ENCODE measurements at regions of chr3 and their contacts with region 1.

Region 1: GRCh38 chr3:47164007-47164881 is at the start of gene SETD2:
- DNase-seq: peak; percentile 71 to 92 (median 83)
- ATAC-seq: peak; percentile 82
- H3K4me3 ChIP-seq: peak within 1 kb of the TSS; percentile 93
- H3K4me3 Mint-ChIP-seq: peak within 1 kb of the TSS; percentile 99
- H3K27ac ChIP-seq: peak within 1 kb of the TSS; percentile 84 to 89
- H3K27ac Mint-ChIP-seq: peak within 1 kb of the TSS; percentile 96
- H3K4me1 ChIP-seq: peaks cover 44% of the 10 kb centered on the region
- H3K4me1 Mint-ChIP-seq: peaks cover 54% of the 10 kb centered on the region
- H3K27me3 ChIP-seq: no peaks in the 10 kb centered on the region
- H3K27me3 Mint-ChIP-seq: no peaks in the 10 kb centered on the region
- CTCF ChIP-seq: peak; percentile 37
- total RNA-seq, gene SETD2: 87.3 to 87.4 TPM

Region 2: GRCh38 chr3:46695177-46695961 is 468.9 kb before region 1 on chr3:
- CTCF ChIA-PET with region 1: no interaction called
- POLR2A ChIA-PET with region 1: interaction called, 3 read pairs
- intact Hi-C with region 1: loop called in 1 of 2 experiments (anchors 10 kb)
- DNase-seq: peak in 13 of 14 experiments; percentile 15 to 71 (median 38)
- ATAC-seq: peak; percentile 43
- H3K4me3 ChIP-seq: peak overlapping the region; percentile 11
- H3K4me3 Mint-ChIP-seq: peak overlapping the region; percentile 84
- H3K27ac ChIP-seq: peak overlapping the region; percentile 64 to 65
- H3K27ac Mint-ChIP-seq: peak overlapping the region; percentile 90
- H3K4me1 ChIP-seq: peaks cover 79% of the 10 kb centered on the region
- H3K4me1 Mint-ChIP-seq: peaks cover 87% of the 10 kb centered on the region
- H3K27me3 ChIP-seq: no peaks in the 10 kb centered on the region
- H3K27me3 Mint-ChIP-seq: no peaks in the 10 kb centered on the region
- CTCF ChIP-seq: peak; percentile 41

Region 3: GRCh38 chr3:47042231-47042791 is 121.9 kb before region 1 on chr3:
- CTCF ChIA-PET with region 1: no interaction called
- POLR2A ChIA-PET with region 1: no interaction called
- intact Hi-C with region 1: no loop called
- DNase-seq: no peak
- ATAC-seq: no peak
- H3K4me3 ChIP-seq: no peak overlapping the region
- H3K4me3 Mint-ChIP-seq: no peak overlapping the region
- H3K27ac ChIP-seq: no peak overlapping the region
- H3K27ac Mint-ChIP-seq: no peak overlapping the region
- H3K4me1 ChIP-seq: peaks cover 13% of the 10 kb centered on the region
- H3K4me1 Mint-ChIP-seq: peaks cover 18% of the 10 kb centered on the region
- H3K27me3 ChIP-seq: no peaks in the 10 kb centered on the region
- H3K27me3 Mint-ChIP-seq: no peaks in the 10 kb centered on the region
- CTCF ChIP-seq: no peak

Region 4: DNA sequence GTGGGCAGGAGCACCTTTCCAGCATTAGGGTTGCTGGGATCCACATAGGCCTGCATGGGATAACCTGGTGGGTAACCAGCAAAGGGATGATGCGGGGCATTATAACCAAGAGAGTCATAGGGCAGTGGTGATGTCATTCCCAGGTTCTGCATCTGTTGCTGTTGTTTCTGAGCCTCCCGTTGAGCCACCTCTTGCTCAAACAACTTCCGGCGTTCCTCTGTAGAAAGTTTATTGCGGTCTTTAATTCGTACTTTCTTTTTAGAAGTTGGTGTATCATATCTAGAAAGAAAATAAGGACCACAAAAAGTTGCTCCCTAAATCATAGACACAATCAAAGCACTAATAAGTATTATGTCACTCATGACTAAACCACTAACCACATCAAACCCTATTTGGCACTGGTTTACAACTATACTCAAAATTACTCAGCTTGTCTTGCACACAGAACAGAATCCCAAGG is 107.0 kb before region 1 on chr3:
- CTCF ChIA-PET with region 1: no interaction called
- POLR2A ChIA-PET with region 1: interaction called, 4 read pairs
- intact Hi-C with region 1: loop called in 1 of 2 experiments (anchors 5 kb)
- DNase-seq: peak in 13 of 14 experiments; percentile 21 to 86 (median 44)
- ATAC-seq: peak; percentile 87
- H3K4me3 ChIP-seq: no peak overlapping the region
- H3K4me3 Mint-ChIP-seq: peak overlapping the region; percentile 43
- H3K27ac ChIP-seq: peak overlapping the region; percentile 18 to 49
- H3K27ac Mint-ChIP-seq: peak overlapping the region; percentile 89
- H3K4me1 ChIP-seq: peaks cover 18% of the 10 kb centered on the region
- H3K4me1 Mint-ChIP-seq: peaks cover 61% of the 10 kb centered on the region
- H3K27me3 ChIP-seq: no peaks in the 10 kb centered on the region
- H3K27me3 Mint-ChIP-seq: no peaks in the 10 kb centered on the region
- CTCF ChIP-seq: no peak

Region 5: DNA sequence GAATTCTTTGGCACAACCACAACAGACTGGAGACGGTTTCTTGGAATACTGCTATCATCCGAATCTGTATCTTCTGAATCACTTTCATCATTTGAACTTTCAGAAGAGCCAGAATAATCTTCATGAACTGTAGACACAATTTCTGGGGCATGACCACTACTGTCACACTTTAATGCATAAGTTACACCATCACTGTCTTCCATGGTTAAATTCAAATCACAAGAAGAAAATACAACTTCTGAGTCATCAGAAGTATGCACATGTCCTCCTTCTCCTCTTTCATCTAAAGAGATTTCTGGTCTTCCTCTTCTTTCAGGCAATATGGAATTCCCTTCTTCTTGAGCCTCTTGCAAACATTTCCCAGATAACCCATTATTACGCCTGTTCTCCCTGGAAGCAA is 42.8 kb before region 1 on chr3:
- CTCF ChIA-PET with region 1: interaction called, 6 read pairs
- POLR2A ChIA-PET with region 1: interaction called, 5 read pairs
- intact Hi-C with region 1: loop called (anchors 5 kb)
- DNase-seq: no peak
- ATAC-seq: no peak
- H3K4me3 ChIP-seq: no peak overlapping the region
- H3K4me3 Mint-ChIP-seq: no peak overlapping the region
- H3K27ac ChIP-seq: no peak overlapping the region
- H3K27ac Mint-ChIP-seq: peak overlapping the region; percentile 65
- H3K4me1 ChIP-seq: no peaks in the 10 kb centered on the region
- H3K4me1 Mint-ChIP-seq: peaks cover 68% of the 10 kb centered on the region
- H3K27me3 ChIP-seq: no peaks in the 10 kb centered on the region
- H3K27me3 Mint-ChIP-seq: no peaks in the 10 kb centered on the region
- CTCF ChIP-seq: no peak

Region 6: GRCh38 chr3:47152578-47152977 is 11.7 kb before region 1 on chr3:
- CTCF ChIA-PET with region 1: no interaction called
- POLR2A ChIA-PET with region 1: interaction called, 20 read pairs
- intact Hi-C with region 1: no loop called
- DNase-seq: no peak
- ATAC-seq: no peak
- H3K4me3 ChIP-seq: no peak overlapping the region
- H3K4me3 Mint-ChIP-seq: no peak overlapping the region
- H3K27ac ChIP-seq: no peak overlapping the region
- H3K27ac Mint-ChIP-seq: peak overlapping the region; percentile 68
- H3K4me1 ChIP-seq: peaks cover 42% of the 10 kb centered on the region
- H3K4me1 Mint-ChIP-seq: peaks cover 76% of the 10 kb centered on the region
- H3K27me3 ChIP-seq: no peaks in the 10 kb centered on the region
- H3K27me3 Mint-ChIP-seq: no peaks in the 10 kb centered on the region
- CTCF ChIP-seq: no peak

Region 7: DNA sequence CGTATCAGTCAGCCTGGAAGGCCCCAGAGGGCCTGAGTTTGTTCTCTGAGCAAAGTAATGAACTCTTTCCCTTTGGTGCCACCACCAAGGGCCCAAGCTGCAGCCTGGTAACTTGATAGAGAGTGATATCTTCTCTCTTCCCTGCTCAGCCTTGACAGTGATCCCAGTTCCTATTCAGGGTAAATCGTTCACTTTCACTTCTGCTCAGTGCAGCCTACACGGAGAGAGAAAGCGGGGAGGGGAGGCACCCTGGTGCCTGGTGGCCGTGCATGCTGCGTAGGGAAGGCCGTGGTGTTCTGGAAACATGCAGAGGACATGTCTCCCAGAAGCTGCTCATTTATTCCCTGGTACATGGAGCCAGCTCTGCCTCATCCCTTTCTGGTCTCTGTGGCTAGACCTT is 63.4 kb after region 1 on chr3:
- CTCF ChIA-PET with region 1: no interaction called
- POLR2A ChIA-PET with region 1: no interaction called
- intact Hi-C with region 1: no loop called
- DNase-seq: peak in 1 of 14 experiments; percentile 29
- ATAC-seq: no peak
- H3K4me3 ChIP-seq: no peak overlapping the region
- H3K4me3 Mint-ChIP-seq: no peak overlapping the region
- H3K27ac ChIP-seq: no peak overlapping the region
- H3K27ac Mint-ChIP-seq: no peak overlapping the region
- H3K4me1 ChIP-seq: no peaks in the 10 kb centered on the region
- H3K4me1 Mint-ChIP-seq: no peaks in the 10 kb centered on the region
- H3K27me3 ChIP-seq: no peaks in the 10 kb centered on the region
- H3K27me3 Mint-ChIP-seq: no peaks in the 10 kb centered on the region
- CTCF ChIP-seq: no peak

Region 8: GRCh38 chr3:47324278-47324865 is 160.1 kb after region 1 on chr3:
- CTCF ChIA-PET with region 1: interaction called, 8 read pairs
- POLR2A ChIA-PET with region 1: no interaction called
- intact Hi-C with region 1: loop called (anchors 2 to 10 kb)
- DNase-seq: peak in 13 of 14 experiments; percentile 19 to 75 (median 32)
- ATAC-seq: peak; percentile 82
- H3K4me3 ChIP-seq: no peak overlapping the region
- H3K4me3 Mint-ChIP-seq: no peak overlapping the region
- H3K27ac ChIP-seq: no peak overlapping the region
- H3K27ac Mint-ChIP-seq: no peak overlapping the region
- H3K4me1 ChIP-seq: no peaks in the 10 kb centered on the region
- H3K4me1 Mint-ChIP-seq: peaks cover 4% of the 10 kb centered on the region
- H3K27me3 ChIP-seq: no peaks in the 10 kb centered on the region
- H3K27me3 Mint-ChIP-seq: no peaks in the 10 kb centered on the region
- CTCF ChIP-seq: peak; percentile 81

Region 9: DNA sequence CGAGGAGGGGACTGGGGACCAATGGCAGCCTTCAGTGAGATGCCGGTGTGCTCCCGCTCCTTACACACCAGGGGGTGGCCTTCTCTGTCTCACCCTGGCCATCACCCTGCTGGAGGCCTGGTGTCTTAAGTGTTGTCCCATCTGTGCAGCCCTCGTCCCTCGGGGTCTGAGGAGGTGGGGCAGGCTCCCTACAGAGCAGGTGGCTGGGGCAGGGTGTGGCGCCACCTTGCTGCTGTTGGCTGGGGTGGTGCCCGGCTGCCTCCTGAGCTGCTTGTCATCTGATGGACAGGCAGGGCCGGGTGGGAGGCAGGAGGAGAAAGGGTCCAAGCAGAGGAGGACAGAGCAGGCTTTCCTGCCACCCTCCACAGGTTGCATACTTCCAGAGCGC is 242.5 kb after region 1 on chr3:
- CTCF ChIA-PET with region 1: no interaction called
- POLR2A ChIA-PET with region 1: no interaction called
- intact Hi-C with region 1: no loop called
- DNase-seq: no peak
- ATAC-seq: no peak
- H3K4me3 ChIP-seq: no peak overlapping the region
- H3K4me3 Mint-ChIP-seq: no peak overlapping the region
- H3K27ac ChIP-seq: no peak overlapping the region
- H3K27ac Mint-ChIP-seq: no peak overlapping the region
- H3K4me1 ChIP-seq: peaks cover 3% of the 10 kb centered on the region
- H3K4me1 Mint-ChIP-seq: no peaks in the 10 kb centered on the region
- H3K27me3 ChIP-seq: no peaks in the 10 kb centered on the region
- H3K27me3 Mint-ChIP-seq: no peaks in the 10 kb centered on the region
- CTCF ChIP-seq: no peak

Region 10: DNA sequence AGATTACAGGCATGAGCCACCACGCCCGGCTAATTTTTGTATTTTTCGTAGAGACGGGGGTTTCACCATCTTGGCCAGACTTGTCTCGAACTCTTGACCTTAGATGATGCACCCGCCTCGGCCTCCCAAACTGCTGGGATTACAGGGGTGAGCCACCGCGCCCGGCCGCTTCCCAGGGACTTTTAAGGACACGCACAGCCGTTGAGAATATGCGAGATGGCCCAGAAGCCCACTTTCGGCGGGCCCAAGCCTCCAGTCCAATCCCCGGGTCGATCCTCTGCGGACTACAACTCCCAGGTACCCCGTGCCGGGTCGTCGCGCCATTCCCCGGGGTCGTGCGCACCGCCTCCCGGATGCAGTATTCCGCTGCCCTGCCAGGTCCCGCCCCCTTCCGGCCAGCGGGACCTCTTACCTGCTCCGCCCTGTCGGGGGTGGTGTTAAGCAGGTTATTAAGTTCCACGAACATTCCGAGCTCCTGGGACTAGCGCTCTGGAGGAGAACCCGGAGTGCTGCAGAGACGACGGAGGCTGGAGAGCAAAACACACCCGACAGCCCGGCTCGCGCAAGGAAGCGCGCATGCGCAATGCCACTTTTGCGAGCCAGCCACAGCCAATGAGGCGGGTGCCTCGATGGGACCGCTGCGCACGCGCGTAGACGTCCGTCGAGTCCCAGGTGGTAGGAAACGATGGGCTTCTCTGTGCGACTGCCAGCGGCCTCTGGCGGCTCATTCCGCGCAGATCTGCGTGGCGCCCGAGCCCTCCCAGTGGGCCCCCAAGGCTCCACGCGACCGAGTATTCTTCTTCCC is 349.1 kb after region 1 on chr3 and contains the start of gene ELP6:
- CTCF ChIA-PET with region 1: no interaction called
- POLR2A ChIA-PET with region 1: no interaction called
- intact Hi-C with region 1: loop called in 1 of 2 experiments (anchors 10 kb)
- DNase-seq: peak; percentile 92 to 99 (median 97)
- ATAC-seq: peak; percentile 93
- H3K4me3 ChIP-seq: peak within 1 kb of the TSS; percentile 96
- H3K4me3 Mint-ChIP-seq: peak within 1 kb of the TSS; percentile 99
- H3K27ac ChIP-seq: peak within 1 kb of the TSS; percentile 93 to 98
- H3K27ac Mint-ChIP-seq: peak within 1 kb of the TSS; percentile 89
- H3K4me1 ChIP-seq: peaks cover 22% of the 10 kb centered on the region
- H3K4me1 Mint-ChIP-seq: peaks cover 28% of the 10 kb centered on the region
- H3K27me3 ChIP-seq: no peaks in the 10 kb centered on the region
- H3K27me3 Mint-ChIP-seq: no peaks in the 10 kb centered on the region
- CTCF ChIP-seq: peak; percentile 68
- total RNA-seq, gene ELP6: 11.0 to 12.3 TPM

Region 11: DNA sequence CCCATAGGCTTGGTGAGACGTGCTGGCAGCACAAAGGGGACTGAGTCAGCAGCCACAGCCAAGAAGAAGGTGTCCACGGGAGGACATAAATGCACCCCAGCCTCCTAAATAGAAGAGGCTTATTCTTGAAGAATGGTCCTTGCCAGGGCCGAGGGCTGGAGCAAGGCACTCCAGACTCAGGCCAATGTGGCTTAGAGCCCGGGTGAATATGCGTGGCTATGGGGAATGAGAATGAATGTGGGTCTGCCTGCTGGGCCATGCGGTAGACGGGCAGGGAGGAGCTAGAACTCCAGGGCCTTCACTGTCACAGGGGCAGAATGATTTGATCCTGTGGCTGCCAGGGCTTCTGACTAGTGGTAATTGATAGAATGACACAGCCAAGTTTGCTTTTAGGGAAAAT is 672.7 kb after region 1 on chr3:
- CTCF ChIA-PET with region 1: no interaction called
- POLR2A ChIA-PET with region 1: no interaction called
- intact Hi-C with region 1: no loop called
- DNase-seq: no peak
- ATAC-seq: no peak
- H3K4me3 ChIP-seq: no peak overlapping the region
- H3K4me3 Mint-ChIP-seq: no peak overlapping the region
- H3K27ac ChIP-seq: no peak overlapping the region
- H3K27ac Mint-ChIP-seq: no peak overlapping the region
- H3K4me1 ChIP-seq: peaks cover 4% of the 10 kb centered on the region
- H3K4me1 Mint-ChIP-seq: peaks cover 4% of the 10 kb centered on the region
- H3K27me3 ChIP-seq: no peaks in the 10 kb centered on the region
- H3K27me3 Mint-ChIP-seq: no peaks in the 10 kb centered on the region
- CTCF ChIP-seq: no peak